ENCODE measurements at regions of chr17 and their contacts with region 1.

Region 1: GRCh38 chr17:29246628-29247027 is at the start of gene CRYBA1:
- DNase-seq: no peak
- ATAC-seq: peak in 2 of 4 donors; percentile 20 to 21
- H3K4me3 ChIP-seq: no peak within 1 kb of the TSS
- H3K27ac ChIP-seq: no peak within 1 kb of the TSS
- H3K4me1 ChIP-seq: no peaks in the 10 kb centered on the region
- H3K27me3 ChIP-seq: no peaks in the 10 kb centered on the region
- CTCF ChIP-seq: no peak
- total RNA-seq, gene CRYBA1: not detected

Region 2: DNA sequence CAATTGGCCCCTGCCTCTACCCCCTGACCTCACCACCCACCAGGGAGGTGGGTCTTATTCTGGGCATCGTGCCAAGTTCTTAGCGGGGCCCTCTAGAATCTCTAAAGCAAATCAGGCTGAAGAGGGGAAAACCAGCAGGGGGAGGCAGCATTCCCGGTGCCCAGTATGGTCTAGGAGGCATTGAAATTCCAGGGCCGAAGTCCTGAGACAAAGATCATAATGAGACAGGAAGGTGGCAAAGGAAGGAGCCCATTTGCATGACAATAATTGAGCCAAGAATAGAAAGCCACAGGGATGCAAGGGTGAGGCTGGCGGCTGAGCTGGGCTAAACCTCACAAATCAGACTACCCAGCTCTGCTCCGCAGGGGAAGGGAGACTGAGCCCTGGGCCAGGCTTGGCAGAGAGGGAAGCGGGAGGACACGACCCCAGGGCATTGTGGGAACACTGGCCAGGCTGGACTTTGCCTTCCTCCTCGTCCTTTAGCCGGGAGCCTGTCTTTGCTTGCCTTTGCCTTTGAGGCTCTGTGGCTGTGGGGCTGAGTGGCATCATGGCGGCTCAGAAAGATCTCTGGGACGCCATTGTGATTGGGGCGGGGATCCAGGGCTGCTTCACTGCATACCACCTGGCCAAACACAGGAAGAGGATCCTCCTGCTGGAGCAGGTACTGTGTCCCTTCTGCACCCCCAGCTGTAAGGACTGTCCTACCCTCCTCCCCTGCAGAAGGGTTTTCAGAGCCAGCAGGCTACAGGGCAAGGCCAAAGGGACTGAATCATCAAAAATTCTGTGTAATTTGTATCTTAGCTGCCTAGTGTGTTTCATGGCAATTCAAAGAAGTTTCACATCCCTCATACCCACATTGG is 203.7 kb before region 1 on chr17 and contains the start of gene PIPOX:
- intact Hi-C with region 1: no loop called
- DNase-seq: no peak
- ATAC-seq: peak in 2 of 4 donors; percentile 21 to 32
- H3K4me3 ChIP-seq: peak within 1 kb of the TSS; percentile 18
- H3K27ac ChIP-seq: no peak within 1 kb of the TSS
- H3K4me1 ChIP-seq: peaks cover 5% of the 10 kb centered on the region
- H3K27me3 ChIP-seq: peaks cover 0 to 5% (median 4%) of the 10 kb centered on the region in 3 donors
- CTCF ChIP-seq: no peak
- total RNA-seq, gene PIPOX: 0.26 to 1.7 (median 0.91) TPM in 3 of 4 donors, not detected in the other

Region 3: DNA sequence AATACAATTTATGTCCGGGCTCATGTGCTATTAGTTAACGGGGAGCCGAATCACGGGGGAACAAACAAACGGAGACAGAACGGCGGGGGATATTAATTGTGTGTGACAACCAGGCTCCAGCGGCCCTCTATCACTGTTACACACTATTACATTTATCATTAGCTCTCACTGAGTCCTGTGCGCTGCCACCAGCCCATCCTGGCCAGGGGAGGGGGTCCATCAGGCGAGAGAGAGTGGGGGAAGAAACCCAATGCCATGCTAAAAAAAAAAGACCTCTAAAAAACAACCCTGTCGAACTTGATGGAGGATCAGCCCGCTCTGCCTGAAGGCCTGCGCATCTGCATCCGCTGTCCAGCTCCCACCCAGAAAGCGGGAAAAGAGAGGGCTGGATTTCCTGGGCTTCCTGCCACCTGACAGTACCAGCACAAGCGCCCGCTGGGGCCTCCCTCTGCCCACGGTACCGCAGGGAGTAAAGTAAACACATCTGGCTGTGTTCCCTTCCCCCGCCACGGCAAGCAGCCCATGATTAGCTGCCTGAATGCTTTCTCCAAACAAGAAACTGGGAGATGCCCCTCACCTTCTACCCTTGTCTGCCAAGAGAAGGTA is 162.0 kb before region 1 on chr17:
- intact Hi-C with region 1: no loop called
- DNase-seq: no peak
- ATAC-seq: no peak
- H3K4me3 ChIP-seq: no peak overlapping the region
- H3K27ac ChIP-seq: no peak overlapping the region
- H3K4me1 ChIP-seq: no peaks in the 10 kb centered on the region
- H3K27me3 ChIP-seq: no peaks in the 10 kb centered on the region
- CTCF ChIP-seq: no peak

Region 4: GRCh38 chr17:29283271-29283895 is 36.8 kb after region 1 on chr17:
- intact Hi-C with region 1: loop called (anchors 5 kb)
- DNase-seq: no peak
- ATAC-seq: no peak
- H3K4me3 ChIP-seq: peak overlapping the region; percentile 11
- H3K27ac ChIP-seq: no peak overlapping the region
- H3K4me1 ChIP-seq: peaks cover 25% of the 10 kb centered on the region
- H3K27me3 ChIP-seq: no peaks in the 10 kb centered on the region
- CTCF ChIP-seq: no peak